ENCODE measurements at regions of chr16 and their contacts with region 1.

Region 1: DNA sequence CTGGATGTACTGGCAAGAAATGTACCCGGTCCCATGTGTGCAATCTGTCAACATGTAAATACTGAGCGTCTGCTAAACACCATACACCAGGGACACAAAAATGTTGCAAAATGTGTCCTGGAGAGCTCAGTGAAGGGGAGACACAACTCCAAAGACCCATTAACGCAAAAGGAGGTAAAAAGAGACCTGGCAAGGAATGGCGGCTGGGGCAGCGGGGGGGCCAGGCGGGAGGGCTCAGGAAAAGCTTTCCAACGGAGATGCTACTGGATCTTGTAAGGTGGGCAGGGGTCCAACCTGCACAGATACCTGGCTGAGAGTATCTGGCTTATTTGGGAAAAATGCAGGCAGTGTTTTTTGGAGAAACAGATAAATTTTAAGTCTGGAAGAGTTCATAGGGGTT is 40.7 kb downstream of the ADCY9 start:
- DNase-seq: no peak
- H3K4me3 ChIP-seq: no peak overlapping the region
- H3K27ac ChIP-seq: no peak overlapping the region
- H3K4me1 ChIP-seq: no peaks in the 10 kb centered on the region
- H3K27me3 ChIP-seq: no peaks in the 10 kb centered on the region
- CTCF ChIP-seq: no peak
- POLR2A ChIP-seq: no peak

Region 2: DNA sequence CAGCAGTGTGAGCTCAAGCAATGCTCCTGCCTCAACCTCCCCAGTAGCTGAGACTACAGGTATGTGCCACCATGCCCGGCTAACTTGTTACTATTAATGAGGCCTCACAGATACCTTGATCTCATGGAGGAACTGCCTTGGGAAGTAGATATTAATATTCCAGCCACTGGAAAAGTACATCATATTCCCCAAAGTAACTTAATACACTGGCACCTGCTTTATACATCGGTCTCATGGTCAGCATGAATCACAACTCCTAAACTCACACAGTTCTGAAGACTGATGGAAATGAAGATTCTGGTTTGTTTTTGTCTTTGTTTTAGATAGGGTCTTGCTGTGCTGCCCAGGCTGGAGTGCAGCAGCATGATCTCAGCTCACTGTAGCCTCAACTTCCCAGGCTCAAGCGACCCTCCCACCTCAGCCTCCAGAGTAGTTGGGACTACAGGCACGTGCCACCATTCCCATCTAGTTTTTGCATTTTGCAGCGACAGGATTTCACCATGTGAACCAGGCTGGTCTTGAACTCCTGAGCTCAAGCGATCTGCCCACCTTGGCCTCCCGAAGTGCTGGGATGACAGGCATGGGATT is 12.6 kb after region 1 on chr16:
- intact Hi-C with region 1: loop called (anchors 1 kb)
- DNase-seq: no peak
- H3K4me3 ChIP-seq: no peak overlapping the region
- H3K27ac ChIP-seq: no peak overlapping the region
- H3K4me1 ChIP-seq: peaks cover 0 to 8% of the 10 kb centered on the region in 2 donors
- H3K27me3 ChIP-seq: no peaks in the 10 kb centered on the region
- CTCF ChIP-seq: no peak
- POLR2A ChIP-seq: no peak

Region 3: GRCh38 chr16:5175266-5175665 is 1099.7 kb after region 1 on chr16:
- intact Hi-C with region 1: no loop called
- DNase-seq: no peak
- H3K4me3 ChIP-seq: no peak overlapping the region
- H3K27ac ChIP-seq: no peak overlapping the region
- H3K4me1 ChIP-seq: no peaks in the 10 kb centered on the region
- H3K27me3 ChIP-seq: no peaks in the 10 kb centered on the region
- CTCF ChIP-seq: no peak
- POLR2A ChIP-seq: no peak